ENCODE measurements at regions of chr17 and their contacts with region 1.

Region 1: DNA sequence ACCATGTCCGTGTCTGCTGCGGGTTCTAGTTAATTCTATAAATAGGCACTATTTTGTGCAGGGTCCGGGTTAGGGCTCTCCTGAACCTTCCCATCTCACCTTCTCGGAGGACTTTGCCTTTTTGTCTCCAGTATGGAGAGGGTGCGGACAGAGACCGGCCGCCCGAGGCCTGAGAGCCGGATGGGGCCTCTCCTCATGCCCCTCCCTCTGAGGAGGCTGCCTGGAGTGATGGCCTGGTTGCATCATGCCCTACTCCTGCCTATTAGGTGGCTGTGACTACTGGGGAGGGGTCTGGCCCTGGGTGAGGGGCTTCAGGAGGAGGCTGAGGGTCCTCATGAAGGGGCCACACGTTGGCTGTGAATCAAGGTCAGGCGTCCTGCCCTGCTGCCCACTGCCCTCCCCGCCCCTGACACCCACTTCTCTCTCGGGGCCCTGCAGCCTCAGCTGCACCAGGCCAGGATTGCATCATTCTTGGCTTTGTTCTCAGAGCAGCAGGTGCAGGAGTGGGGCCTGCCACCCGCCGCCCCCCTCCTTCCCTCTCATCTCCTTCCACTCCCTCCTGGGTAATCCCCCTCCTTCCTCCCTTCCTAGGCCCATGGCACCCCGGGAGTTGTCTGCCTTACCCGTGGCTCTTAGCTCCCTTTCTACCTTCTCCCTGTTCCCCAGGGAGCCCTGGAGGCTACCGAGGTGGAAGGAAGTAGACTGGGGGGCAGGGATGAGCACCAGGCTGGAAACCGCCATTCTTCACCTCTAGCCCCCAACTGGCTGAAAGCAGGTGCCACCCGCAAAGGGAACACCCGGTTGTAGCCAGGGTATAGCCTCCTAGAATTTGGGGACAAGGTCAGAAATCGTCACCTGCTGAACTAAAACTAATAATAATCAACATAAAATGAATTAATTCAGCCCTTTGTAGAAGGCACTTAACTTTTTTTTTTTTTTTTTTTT is 12.7 kb upstream of the ARHGAP23 start:
- DNase-seq: peak in 1 of 6 donors; percentile 49
- ATAC-seq: peak in 3 of 4 donors; percentile 31 to 53 (median 41)
- H3K4me3 ChIP-seq: no peak overlapping the region
- H3K27ac ChIP-seq: no peak overlapping the region
- H3K4me1 ChIP-seq: no peaks in the 10 kb centered on the region
- H3K27me3 ChIP-seq: peaks cover 0 to 7% (median 0%) of the 10 kb centered on the region in 4 donors
- CTCF ChIP-seq: no peak

Region 2: GRCh38 chr17:38341035-38341721 is 74.3 kb before region 1 on chr17:
- intact Hi-C with region 1: loop called (anchors 5 kb)
- DNase-seq: peak in 5 of 6 donors; percentile 46 to 92 (median 81)
- ATAC-seq: peak; percentile 70 to 87 (median 77)
- H3K4me3 ChIP-seq: no peak overlapping the region
- H3K27ac ChIP-seq: no peak overlapping the region
- H3K4me1 ChIP-seq: no peaks in the 10 kb centered on the region
- H3K27me3 ChIP-seq: no peaks in the 10 kb centered on the region
- CTCF ChIP-seq: no peak

Region 3: GRCh38 chr17:38349097-38349730 is 66.3 kb before region 1 on chr17:
- intact Hi-C with region 1: loop called (anchors 5 kb)
- DNase-seq: peak; percentile 77 to 89 (median 88)
- ATAC-seq: peak; percentile 33 to 69 (median 66)
- H3K4me3 ChIP-seq: no peak overlapping the region
- H3K27ac ChIP-seq: no peak overlapping the region
- H3K4me1 ChIP-seq: peaks cover 4 to 17% (median 4%) of the 10 kb centered on the region in 3 donors
- H3K27me3 ChIP-seq: no peaks in the 10 kb centered on the region
- CTCF ChIP-seq: peak; percentile 75 to 89 (median 84)